ENCODE measurements at regions of chr10 and their contacts with region 1.

Region 1: DNA sequence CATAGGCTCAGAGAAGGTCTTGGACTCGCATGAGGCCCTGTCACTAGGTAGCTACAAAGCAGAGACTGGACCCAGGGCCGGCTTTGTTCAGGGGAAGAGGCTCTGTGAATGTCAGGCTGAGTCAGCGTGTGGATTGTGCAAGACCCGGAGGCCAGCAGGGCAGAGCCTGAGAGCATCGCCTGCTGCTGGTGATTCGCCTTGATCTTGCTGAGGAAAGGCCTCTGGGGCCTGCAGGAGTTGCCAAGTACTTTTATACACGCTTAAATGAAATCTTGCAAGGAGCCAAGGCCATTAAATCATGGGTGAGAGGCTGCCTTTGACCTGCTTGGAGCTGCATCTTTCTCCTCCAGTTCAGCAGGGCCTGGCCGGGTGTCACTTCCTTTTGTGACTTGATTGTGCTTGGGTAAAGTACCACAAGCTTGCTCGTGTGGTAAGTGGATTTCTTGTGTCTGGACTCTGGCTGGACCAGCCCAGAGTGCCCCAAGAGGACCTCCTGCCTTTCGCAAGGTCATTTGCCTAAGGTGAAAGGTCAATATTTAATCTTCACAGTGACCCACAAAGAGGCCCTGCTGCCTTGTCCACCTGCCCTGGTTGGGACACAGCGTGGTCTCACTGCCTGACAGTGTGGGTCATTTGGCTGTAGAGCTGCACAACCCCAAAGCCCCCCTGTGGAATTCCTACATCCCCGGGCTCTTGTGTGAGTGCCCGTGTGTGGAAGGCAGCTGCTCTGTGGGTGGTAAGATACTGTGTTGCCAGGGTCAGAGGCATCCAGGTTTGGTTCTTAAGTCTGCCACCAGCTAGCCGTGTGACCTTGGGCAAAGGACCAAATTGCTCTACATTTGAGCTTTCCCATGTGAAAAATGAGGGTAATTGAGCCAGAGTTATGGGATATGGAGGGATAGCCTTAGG is 38.6 kb upstream of the SH2D4B start:
- DNase-seq: peak; percentile 81 to 97 (median 94)
- ATAC-seq: peak; percentile 82 to 95 (median 89)
- H3K4me3 ChIP-seq: peak overlapping the region in 1 of 12 donors; percentile 18
- H3K27ac ChIP-seq: peak overlapping the region; percentile 69 to 95 (median 80)
- H3K4me1 ChIP-seq: peaks cover 54 to 99% (median 86%) of the 10 kb centered on the region in 12 donors
- H3K27me3 ChIP-seq: no peaks in the 10 kb centered on the region
- CTCF ChIP-seq: no peak
- POLR2A ChIP-seq: peak in 1 of 2 donors; percentile 9

Region 2: GRCh38 chr10:80459047-80459931 is 39.8 kb before region 1 on chr10:
- intact Hi-C with region 1: loop called in 5 of 10 experiments (anchors 2 to 5 kb)
- DNase-seq: peak; percentile 65 to 80 (median 74)
- ATAC-seq: peak in 3 of 4 donors; percentile 22 to 55 (median 53)
- H3K4me3 ChIP-seq: peak overlapping the region in 9 of 12 donors; percentile 3 to 98 (median 24)
- H3K27ac ChIP-seq: peak overlapping the region; percentile 20 to 99 (median 78)
- H3K4me1 ChIP-seq: peaks cover 23 to 91% (median 81%) of the 10 kb centered on the region in 12 donors
- H3K27me3 ChIP-seq: no peaks in the 10 kb centered on the region
- CTCF ChIP-seq: peak in 1 of 12 donors; percentile 8
- POLR2A ChIP-seq: peak in 1 of 2 donors; percentile 45

Region 3: GRCh38 chr10:80769700-80770160 is 270.6 kb after region 1 on chr10:
- intact Hi-C with region 1: no loop called
- DNase-seq: no peak
- ATAC-seq: no peak
- H3K4me3 ChIP-seq: no peak overlapping the region
- H3K27ac ChIP-seq: no peak overlapping the region
- H3K4me1 ChIP-seq: no peaks in the 10 kb centered on the region
- H3K27me3 ChIP-seq: peaks cover 0 to 10% (median 0%) of the 10 kb centered on the region in 9 donors
- CTCF ChIP-seq: no peak
- POLR2A ChIP-seq: no peak